Activated CD4-positive, alpha-beta memory T cell treated with anti-CD3 and anti-CD28 coated beads, Interleukin-2, amount 10 ng/mL, durations not matched to agents 7 days and 5 days (primary cell): ENCODE measurements at regions of chr5 and their contacts with region 1.

Region 1: GRCh38 chr5:160021831-160022446 is 13.0 kb downstream of the TTC1 start:
- DNase-seq: peak; percentile 53
- H3K4me3 Mint-ChIP-seq: no peak overlapping the region
- H3K27ac Mint-ChIP-seq: no peak overlapping the region
- H3K4me1 Mint-ChIP-seq: peaks cover 16% of the 10 kb centered on the region
- H3K27me3 Mint-ChIP-seq: no peaks in the 10 kb centered on the region

Region 2: DNA sequence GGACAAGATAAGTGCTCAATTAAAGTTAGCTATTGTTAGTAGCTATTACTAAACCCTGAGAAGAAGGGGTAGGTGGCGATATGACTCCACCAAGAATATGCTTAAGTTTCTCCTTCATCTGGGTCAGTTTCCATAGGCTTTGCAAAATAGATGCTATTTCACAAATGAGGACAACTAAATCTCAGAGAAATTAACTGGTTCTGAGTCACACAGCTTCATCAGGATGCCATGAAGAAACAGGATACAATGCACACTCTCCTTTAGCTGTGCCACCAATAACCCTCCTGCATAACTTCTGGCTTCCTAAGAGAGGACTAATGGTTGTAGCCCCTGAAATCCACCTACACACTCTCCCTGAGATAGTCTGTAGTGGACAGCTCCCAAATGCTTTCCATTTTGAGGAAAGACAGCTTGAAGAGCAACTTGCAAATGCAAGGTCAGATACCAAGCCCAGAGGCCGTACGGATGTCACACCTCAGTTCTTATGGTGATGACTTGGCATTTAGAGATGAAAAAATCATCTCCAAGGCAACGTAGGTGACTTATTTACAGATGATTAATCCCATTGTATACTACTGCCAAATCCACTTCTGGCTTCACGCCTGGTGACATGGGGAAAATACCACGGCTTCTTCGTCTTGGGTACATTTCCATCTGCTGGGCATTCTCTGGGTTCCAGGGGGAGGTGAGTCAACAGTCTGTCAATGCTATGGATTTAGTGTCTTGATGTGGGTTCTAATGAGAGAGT is 440.3 kb before region 1 on chr5:
- CTCF ChIA-PET with region 1: no interaction called
- POLR2A ChIA-PET with region 1: no interaction called
- DNase-seq: no peak
- H3K4me3 Mint-ChIP-seq: no peak overlapping the region
- H3K27ac Mint-ChIP-seq: no peak overlapping the region
- H3K4me1 Mint-ChIP-seq: no peaks in the 10 kb centered on the region
- H3K27me3 Mint-ChIP-seq: peaks cover 5% of the 10 kb centered on the region

Region 3: GRCh38 chr5:160008877-160009590 is 12.9 kb before region 1 on chr5 and contains the start of gene TTC1:
- CTCF ChIA-PET with region 1: interaction called, 41 read pairs
- POLR2A ChIA-PET with region 1: interaction called, 18 read pairs
- DNase-seq: peak; percentile 93
- H3K4me3 Mint-ChIP-seq: peak within 1 kb of the TSS; percentile 89
- H3K27ac Mint-ChIP-seq: peak within 1 kb of the TSS; percentile 95
- H3K4me1 Mint-ChIP-seq: peaks cover 27% of the 10 kb centered on the region
- H3K27me3 Mint-ChIP-seq: no peaks in the 10 kb centered on the region
- total RNA-seq, gene TTC1: 41.6 to 43.0 TPM

Region 4: GRCh38 chr5:160342403-160342941 is 320.5 kb after region 1 on chr5:
- CTCF ChIA-PET with region 1: interaction called, 42 read pairs
- POLR2A ChIA-PET with region 1: no interaction called
- DNase-seq: no peak
- H3K4me3 Mint-ChIP-seq: no peak overlapping the region
- H3K27ac Mint-ChIP-seq: no peak overlapping the region
- H3K4me1 Mint-ChIP-seq: peaks cover 11% of the 10 kb centered on the region
- H3K27me3 Mint-ChIP-seq: peaks cover 2% of the 10 kb centered on the region